ENCODE measurements at regions of chr10 and their contacts with region 1.

Region 1: GRCh38 chr10:113958631-113959382 is 84.9 kb upstream of the ADRB1 start:
- DNase-seq: no peak
- H3K4me3 Mint-ChIP-seq: no peak overlapping the region
- H3K27ac Mint-ChIP-seq: no peak overlapping the region
- H3K4me1 Mint-ChIP-seq: peaks cover 40% of the 10 kb centered on the region
- H3K27me3 Mint-ChIP-seq: peaks cover 20% of the 10 kb centered on the region

Region 2: DNA sequence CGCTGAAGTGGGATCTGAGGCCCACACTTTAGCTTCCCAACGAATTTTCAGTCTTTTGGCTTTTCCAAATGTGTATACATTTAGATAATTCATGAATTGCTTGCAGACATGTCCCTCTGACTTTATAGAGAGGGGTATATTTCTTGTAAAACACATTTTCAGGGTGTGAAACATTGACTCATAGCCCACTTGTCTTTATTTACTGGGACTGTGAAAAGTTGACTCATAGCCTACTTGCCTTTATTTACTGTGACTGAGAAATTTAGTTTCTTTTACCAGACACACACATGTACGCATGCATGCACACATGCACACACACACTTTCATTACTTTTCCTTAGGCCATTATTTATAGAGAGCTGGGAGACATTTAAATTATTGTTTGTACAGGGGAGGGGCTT is 1432.7 kb before region 1 on chr10:
- intact Hi-C with region 1: loop called (anchors 5 kb)
- DNase-seq: no peak
- H3K4me3 Mint-ChIP-seq: no peak overlapping the region
- H3K27ac Mint-ChIP-seq: no peak overlapping the region
- H3K4me1 Mint-ChIP-seq: peaks cover 11% of the 10 kb centered on the region
- H3K27me3 Mint-ChIP-seq: peaks cover 7% of the 10 kb centered on the region

Region 3: DNA sequence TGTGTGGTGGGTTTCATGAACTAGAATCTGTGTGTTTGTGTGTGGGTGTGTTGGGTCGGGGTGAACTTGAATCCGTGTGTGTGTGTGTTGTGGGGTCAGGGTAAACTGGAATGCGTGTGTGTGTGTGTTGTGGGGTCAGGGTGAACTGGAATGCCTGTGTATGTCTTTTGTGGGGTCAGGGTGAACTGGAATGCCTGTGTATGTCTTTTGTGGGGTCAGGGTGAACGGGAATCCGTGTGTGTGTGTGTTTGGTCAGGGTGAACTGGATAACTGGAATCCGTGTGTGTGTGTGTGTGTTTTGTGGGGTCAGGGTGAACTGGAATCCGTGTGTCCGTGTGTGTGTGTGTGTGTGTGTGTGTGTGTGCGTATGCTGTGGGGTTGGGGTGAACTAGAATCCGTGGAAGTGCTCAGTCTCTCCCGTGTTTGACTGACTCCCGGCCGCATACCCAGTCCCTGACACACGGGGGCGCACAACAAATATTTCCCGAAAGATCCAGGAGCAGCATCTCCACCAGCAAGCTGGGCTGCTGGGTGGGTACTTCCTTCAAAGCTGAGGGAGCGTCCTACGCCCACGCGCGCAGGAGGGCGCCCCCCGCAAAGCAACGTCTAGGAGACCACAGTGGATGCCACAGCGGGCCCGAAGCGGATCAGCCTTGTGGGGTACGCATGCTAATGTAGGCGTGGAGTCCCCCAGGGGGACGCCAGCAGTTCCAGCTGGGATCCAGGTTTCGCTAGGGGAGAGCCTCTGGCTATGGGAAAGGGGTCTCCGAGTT is 279.9 kb before region 1 on chr10:
- intact Hi-C with region 1: loop called (anchors 1 kb)
- DNase-seq: peak; percentile 92
- H3K4me3 Mint-ChIP-seq: peak overlapping the region; percentile 89
- H3K27ac Mint-ChIP-seq: peak overlapping the region; percentile 89
- H3K4me1 Mint-ChIP-seq: peaks cover 37% of the 10 kb centered on the region
- H3K27me3 Mint-ChIP-seq: peaks cover 9% of the 10 kb centered on the region

Region 4: DNA sequence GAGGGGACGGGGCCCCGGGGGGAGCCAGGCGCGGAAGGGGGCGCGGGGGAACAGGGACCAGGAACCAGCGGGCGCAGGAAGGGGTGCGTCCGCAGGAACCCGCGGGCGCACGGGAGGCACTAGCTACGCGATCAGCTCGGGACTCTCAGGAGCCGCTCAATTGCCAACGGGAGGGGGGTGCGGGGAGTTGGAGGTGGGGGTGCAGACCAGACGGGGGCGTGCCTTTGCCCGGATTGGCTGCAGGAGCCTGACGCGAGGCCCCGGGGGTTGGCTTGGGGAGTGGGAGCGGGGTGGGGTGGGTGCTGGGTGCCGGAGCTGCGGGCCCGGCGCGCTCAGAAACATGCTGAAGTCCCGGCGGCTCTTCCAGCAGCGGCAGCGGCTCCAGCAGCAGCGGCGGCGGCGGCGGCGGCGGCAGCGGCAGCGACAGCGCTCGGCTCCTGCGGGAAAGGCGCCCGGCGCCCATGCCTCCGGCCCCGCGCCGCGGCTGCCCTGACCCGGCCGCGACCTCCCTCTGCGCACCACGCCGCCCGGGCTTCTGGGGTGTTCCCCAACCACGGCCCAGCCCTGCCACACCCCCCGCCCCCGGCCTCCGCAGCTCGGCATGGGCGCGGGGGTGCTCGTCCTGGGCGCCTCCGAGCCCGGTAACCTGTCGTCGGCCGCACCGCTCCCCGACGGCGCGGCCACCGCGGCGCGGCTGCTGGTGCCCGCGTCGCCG is 84.9 kb after region 1 on chr10 and contains the start of gene ADRB1:
- intact Hi-C with region 1: loop called (anchors 10 kb)
- DNase-seq: peak; percentile 70
- H3K4me3 Mint-ChIP-seq: peak within 1 kb of the TSS; percentile 71
- H3K27ac Mint-ChIP-seq: no peak within 1 kb of the TSS
- H3K4me1 Mint-ChIP-seq: peaks cover 16% of the 10 kb centered on the region
- H3K27me3 Mint-ChIP-seq: peaks cover 80% of the 10 kb centered on the region
- total RNA-seq, gene ADRB1: not detected in 2 replicates

Region 5: DNA sequence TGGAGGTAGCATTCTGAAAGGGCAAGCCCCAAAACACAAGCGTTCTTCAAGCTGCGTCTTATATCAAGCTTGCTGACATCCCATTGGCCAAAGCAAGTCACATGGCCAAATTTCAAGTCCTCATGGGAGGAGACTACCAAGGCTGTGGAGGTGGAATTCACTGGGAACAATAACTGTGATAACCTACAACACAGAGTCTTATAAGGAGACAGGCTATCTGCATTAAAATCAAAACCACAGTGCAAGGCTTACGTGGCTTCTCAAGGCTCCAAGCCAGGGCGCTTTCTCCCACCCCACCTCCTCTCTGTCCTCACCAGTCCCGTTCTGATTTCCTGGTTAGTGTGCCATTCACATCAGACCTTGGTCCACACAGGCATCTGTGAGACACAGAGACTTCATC is 124.2 kb after region 1 on chr10:
- intact Hi-C with region 1: loop called (anchors 10 kb)
- DNase-seq: peak; percentile 73
- H3K4me3 Mint-ChIP-seq: no peak overlapping the region
- H3K27ac Mint-ChIP-seq: no peak overlapping the region
- H3K4me1 Mint-ChIP-seq: no peaks in the 10 kb centered on the region
- H3K27me3 Mint-ChIP-seq: peaks cover 24% of the 10 kb centered on the region

Measured in activated CD4-positive, alpha-beta T cell treated with anti-CD3 and anti-CD28 coated beads, Interleukin-2, amount 10 ng/mL, durations not matched to agents 24 days and 14 days (primary cell).